Naive thymus-derived CD4-positive, alpha-beta T cell (primary cell): ENCODE measurements at regions of chr22 and their contacts with region 1.

Region 1: DNA sequence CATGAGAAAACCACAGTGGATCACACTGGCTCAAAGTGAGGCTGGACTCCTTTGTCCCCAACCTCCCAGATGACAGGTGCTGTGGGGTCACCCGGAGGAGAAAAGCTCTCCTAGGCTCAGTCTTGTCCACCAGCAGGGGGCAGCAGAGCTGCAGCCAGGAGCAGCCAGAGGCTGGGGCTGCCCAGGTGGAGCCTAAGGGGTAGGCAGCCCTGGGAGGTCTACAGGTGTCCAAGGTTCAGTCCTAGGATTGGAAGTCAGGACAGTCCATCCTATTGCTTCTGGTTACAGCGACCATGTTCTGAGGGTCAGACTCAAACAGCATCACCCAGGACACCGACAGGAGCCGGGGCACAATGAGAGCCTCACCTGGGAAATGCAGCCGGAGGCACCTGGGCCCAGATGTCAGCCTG is 77.6 kb upstream of the IGLL5 start:
- DNase-seq: peak; percentile 44 to 89 (median 67)
- ATAC-seq: peak; percentile 80
- H3K4me3 ChIP-seq: no peak overlapping the region
- H3K4me3 Mint-ChIP-seq: peak overlapping the region in 1 of 10 donors; percentile 49
- H3K27ac ChIP-seq: no peak overlapping the region
- H3K27ac Mint-ChIP-seq: peak overlapping the region in 5 of 9 donors; percentile 51 to 73 (median 69)
- H3K4me1 ChIP-seq: peaks cover 8 to 34% of the 10 kb centered on the region in 2 donors
- H3K4me1 Mint-ChIP-seq: peaks cover 15 to 55% (median 48%) of the 10 kb centered on the region in 7 donors
- H3K27me3 ChIP-seq: no peaks in the 10 kb centered on the region
- H3K27me3 Mint-ChIP-seq: peaks cover 0 to 35% (median 0%) of the 10 kb centered on the region in 5 donors

Region 2: DNA sequence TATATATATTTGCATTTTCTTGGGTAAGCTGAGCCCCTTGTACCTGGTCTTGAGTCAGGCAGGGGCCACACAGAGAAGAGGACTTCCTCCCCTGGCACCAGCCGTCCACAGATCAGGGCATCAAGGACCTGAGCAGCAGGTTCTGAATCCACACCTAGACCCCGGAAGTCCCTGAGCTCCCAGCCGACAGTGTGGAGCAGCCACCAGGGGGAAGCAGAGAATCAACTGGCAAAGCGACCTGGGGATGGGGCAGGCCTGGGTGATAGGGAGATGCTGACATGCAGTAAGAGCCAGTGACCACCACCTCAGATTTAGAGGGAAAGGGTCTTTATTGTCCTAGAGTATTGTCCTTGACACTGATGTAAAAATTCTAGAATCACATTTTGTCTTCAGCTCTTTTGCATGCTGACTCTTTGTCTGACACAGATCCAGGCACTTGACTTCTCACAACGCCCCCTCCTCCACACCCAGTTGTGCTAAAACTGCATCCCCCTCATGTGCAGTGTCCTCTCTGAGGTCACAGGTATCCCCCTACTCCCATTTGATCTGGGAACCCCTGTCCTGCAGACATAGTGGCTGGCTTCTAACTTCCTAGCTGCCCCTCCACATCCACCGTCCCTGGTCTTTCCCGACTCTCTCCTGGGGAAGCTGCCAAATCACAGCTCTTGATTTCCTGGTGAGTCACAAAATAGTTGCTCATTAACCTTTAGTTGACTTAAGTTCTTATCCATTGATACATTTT is 56.3 kb before region 1 on chr22:
- CTCF ChIA-PET with region 1: interaction called, 25 read pairs
- POLR2A ChIA-PET with region 1: interaction called, 28 read pairs
- intact Hi-C with region 1: loop called in 1 of 2 experiments (anchors 1 kb)
- DNase-seq: peak; percentile 52 to 78 (median 74)
- ATAC-seq: peak; percentile 92
- H3K4me3 ChIP-seq: peak overlapping the region; percentile 29
- H3K4me3 Mint-ChIP-seq: peak overlapping the region in 8 of 10 donors; percentile 57 to 72 (median 68)
- H3K27ac ChIP-seq: peak overlapping the region; percentile 57
- H3K27ac Mint-ChIP-seq: peak overlapping the region in 8 of 9 donors; percentile 88 to 96 (median 95)
- H3K4me1 ChIP-seq: peaks cover 11 to 57% of the 10 kb centered on the region in 2 donors
- H3K4me1 Mint-ChIP-seq: peaks cover 4 to 48% (median 44%) of the 10 kb centered on the region in 7 donors
- H3K27me3 ChIP-seq: no peaks in the 10 kb centered on the region
- H3K27me3 Mint-ChIP-seq: peaks cover 0 to 3% (median 0%) of the 10 kb centered on the region in 5 donors

Region 3: GRCh38 chr22:22830193-22830592 is 20.2 kb after region 1 on chr22:
- CTCF ChIA-PET with region 1: interaction called, 11 read pairs
- POLR2A ChIA-PET with region 1: interaction called, 3 read pairs
- intact Hi-C with region 1: no loop called
- DNase-seq: no peak
- ATAC-seq: no peak
- H3K4me3 ChIP-seq: no peak overlapping the region
- H3K4me3 Mint-ChIP-seq: no peak overlapping the region
- H3K27ac ChIP-seq: no peak overlapping the region
- H3K27ac Mint-ChIP-seq: no peak overlapping the region
- H3K4me1 ChIP-seq: no peaks in the 10 kb centered on the region
- H3K4me1 Mint-ChIP-seq: peaks cover 11 to 38% (median 22%) of the 10 kb centered on the region in 7 donors
- H3K27me3 ChIP-seq: no peaks in the 10 kb centered on the region
- H3K27me3 Mint-ChIP-seq: peaks cover 0 to 67% (median 0%) of the 10 kb centered on the region in 5 donors

Region 4: GRCh38 chr22:22855617-22856308 is 45.7 kb after region 1 on chr22:
- CTCF ChIA-PET with region 1: interaction called, 247 read pairs
- POLR2A ChIA-PET with region 1: interaction called, 96 read pairs
- intact Hi-C with region 1: loop called in 1 of 2 experiments (anchors 1 kb)
- DNase-seq: peak in 6 of 9 donors; percentile 6 to 55 (median 20)
- ATAC-seq: peak; percentile 63
- H3K4me3 ChIP-seq: no peak overlapping the region
- H3K4me3 Mint-ChIP-seq: no peak overlapping the region
- H3K27ac ChIP-seq: no peak overlapping the region
- H3K27ac Mint-ChIP-seq: no peak overlapping the region
- H3K4me1 ChIP-seq: peaks cover 0 to 4% of the 10 kb centered on the region in 2 donors
- H3K4me1 Mint-ChIP-seq: peaks cover 0 to 5% (median 0%) of the 10 kb centered on the region in 7 donors
- H3K27me3 ChIP-seq: no peaks in the 10 kb centered on the region
- H3K27me3 Mint-ChIP-seq: peaks cover 0 to 58% (median 0%) of the 10 kb centered on the region in 5 donors

Region 5: DNA sequence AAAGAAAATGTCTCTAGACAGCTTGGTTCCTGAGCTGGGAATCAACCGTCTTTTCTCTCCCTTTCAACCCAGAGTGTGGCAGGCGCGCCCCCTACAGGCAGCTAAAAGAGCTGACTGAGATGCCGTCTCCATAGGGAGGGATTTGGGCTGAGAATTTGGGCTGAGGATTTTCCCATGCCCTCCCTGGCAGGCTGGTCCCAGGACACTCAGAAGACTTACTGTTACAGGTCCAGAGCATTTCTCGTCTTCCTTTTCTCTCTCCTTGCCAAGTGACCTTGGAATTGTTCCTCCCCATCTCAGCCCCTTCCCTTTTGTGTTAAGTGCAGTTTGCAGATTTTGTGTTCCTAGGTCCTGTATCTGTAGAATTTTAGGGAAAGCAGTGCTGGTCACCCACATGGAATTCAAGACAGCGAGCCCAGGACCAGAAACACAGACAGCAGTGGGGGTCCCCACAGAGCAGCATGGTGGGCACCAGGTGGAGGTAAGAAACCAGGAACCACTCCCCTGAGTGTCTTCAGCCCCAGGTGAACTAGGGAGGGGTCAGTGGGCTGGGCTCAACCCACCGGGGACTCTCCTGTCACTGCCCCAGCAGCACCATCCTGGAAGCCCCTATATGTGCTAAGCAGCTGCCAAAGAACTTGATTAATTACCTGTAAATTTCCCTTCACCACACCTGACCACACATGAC is 67.6 kb after region 1 on chr22:
- CTCF ChIA-PET with region 1: interaction called, 322 read pairs
- POLR2A ChIA-PET with region 1: interaction called, 17 read pairs
- intact Hi-C with region 1: loop called (anchors 1 kb)
- DNase-seq: peak; percentile 43 to 80 (median 72)
- ATAC-seq: peak; percentile 67
- H3K4me3 ChIP-seq: no peak overlapping the region
- H3K4me3 Mint-ChIP-seq: no peak overlapping the region
- H3K27ac ChIP-seq: no peak overlapping the region
- H3K27ac Mint-ChIP-seq: peak overlapping the region in 3 of 9 donors; percentile 36 to 42 (median 40)
- H3K4me1 ChIP-seq: no peaks in the 10 kb centered on the region
- H3K4me1 Mint-ChIP-seq: peaks cover 0 to 4% (median 3%) of the 10 kb centered on the region in 7 donors
- H3K27me3 ChIP-seq: no peaks in the 10 kb centered on the region
- H3K27me3 Mint-ChIP-seq: peaks cover 0 to 48% (median 0%) of the 10 kb centered on the region in 5 donors